Prostate gland (tissue), 2 donors: ENCODE measurements at regions of chr2 and their contacts with region 1.

Region 1: GRCh38 chr2:173402405-173402974 is 47.8 kb downstream of the CDCA7 start:
- DNase-seq: peak; percentile 74
- H3K4me3 ChIP-seq: no peak overlapping the region
- H3K27ac ChIP-seq: no peak overlapping the region
- H3K4me1 ChIP-seq: no peaks in the 10 kb centered on the region
- H3K27me3 ChIP-seq: no peaks in the 10 kb centered on the region
- CTCF ChIP-seq: peak; percentile 68 to 90 (median 86)
- POLR2A ChIP-seq: no peak

Region 2: DNA sequence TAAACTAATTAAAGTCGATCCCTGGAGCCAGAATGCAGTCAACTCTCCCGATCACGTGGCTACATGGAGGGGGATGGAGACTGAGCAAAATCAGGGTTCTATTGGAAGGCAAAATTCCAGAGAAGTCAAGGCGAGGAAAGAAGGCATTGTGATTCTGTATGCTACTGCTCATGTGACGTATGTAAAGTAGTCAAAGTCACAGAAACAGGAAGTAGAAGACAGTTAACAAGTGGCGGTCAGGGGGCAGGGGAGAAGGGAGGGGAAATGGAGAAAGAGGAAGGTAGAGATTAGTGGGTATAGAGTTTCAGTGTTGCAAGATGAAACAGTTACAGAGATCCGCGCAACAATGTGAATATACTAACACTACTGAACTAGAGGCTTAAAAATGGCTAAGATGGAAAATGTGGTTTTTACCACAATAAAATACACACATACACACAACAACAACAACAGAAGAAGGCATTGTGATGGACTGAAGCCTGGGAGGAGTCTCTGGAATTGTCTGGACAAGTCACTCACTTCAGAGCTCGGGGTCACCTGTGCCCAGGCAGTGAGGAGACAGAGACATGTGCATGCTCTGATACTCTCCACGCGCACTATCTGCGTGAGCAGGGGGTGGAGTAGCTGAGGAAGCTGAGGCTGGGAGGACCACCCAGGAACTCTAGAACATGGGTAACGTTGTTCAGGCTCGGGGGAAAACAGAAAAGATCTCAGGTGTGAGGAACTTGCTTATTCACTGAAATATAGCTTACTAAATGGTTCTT is 137.7 kb before region 1 on chr2:
- intact Hi-C with region 1: no loop called
- DNase-seq: no peak
- H3K4me3 ChIP-seq: no peak overlapping the region
- H3K27ac ChIP-seq: no peak overlapping the region
- H3K4me1 ChIP-seq: no peaks in the 10 kb centered on the region
- H3K27me3 ChIP-seq: no peaks in the 10 kb centered on the region
- CTCF ChIP-seq: no peak
- POLR2A ChIP-seq: no peak

Region 3: DNA sequence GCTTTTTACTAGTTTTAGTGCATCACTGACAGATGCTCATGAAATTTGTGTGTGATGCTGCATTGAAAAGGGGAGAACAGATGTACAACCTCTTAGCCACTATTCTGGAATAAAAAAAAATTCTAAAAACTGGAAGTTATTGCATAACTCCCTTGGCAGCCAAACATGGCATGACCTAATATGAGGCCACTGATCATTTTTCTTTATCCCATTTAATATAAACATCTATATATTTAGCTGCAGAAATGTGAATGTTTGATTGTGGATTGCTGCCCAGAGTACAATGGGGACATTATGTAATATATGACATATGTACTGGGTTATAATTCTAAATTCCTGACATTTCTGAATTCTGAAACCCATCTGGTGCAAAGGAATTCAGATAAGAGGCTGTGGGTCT is 38.7 kb after region 1 on chr2:
- intact Hi-C with region 1: loop called (anchors 5 kb)
- DNase-seq: no peak
- H3K4me3 ChIP-seq: no peak overlapping the region
- H3K27ac ChIP-seq: no peak overlapping the region
- H3K4me1 ChIP-seq: no peaks in the 10 kb centered on the region
- H3K27me3 ChIP-seq: no peaks in the 10 kb centered on the region
- CTCF ChIP-seq: no peak
- POLR2A ChIP-seq: no peak

Region 4: DNA sequence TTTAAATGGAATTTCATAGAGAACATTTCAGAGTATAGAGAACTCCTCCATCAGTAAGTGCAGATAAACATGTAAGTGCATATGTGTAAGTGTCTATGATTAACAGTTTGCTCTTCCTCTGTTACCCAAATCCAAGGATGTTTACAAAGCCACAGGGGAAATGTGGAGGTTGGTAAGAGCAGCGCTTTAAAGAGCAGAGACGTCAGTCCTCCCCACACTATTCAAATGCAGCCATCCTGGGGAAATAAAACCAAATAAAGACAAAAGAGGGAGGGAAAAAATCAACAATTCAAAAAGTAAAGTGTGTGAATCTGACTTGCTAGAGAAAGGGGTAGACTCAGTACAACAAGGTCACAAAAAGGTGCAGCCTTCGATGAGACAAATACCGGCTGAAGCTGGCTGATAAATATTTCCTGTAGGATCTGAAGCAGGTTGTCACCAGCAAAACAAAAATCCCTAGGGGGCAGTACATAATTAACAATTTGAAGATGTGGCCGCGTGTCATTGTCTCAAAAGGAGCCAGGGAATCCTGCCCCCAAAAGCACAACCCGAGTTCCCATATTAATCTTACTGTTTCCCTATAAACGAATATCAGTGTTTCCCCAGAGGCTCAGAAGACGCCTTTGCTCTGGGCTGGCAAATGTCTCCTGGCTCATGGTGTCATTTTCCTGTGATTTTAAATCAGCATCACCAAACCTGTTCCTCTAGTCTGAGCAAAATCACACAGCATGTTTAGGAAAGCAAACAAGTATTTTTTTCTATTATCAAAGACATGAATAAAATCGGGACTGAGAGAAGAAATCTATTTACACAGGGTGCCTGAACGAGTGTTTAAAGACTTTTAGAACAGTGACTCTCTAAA is 168.8 kb after region 1 on chr2:
- intact Hi-C with region 1: loop called (anchors 10 kb)
- DNase-seq: peak; percentile 68
- H3K4me3 ChIP-seq: peak overlapping the region in 1 of 2 donors; percentile 10
- H3K27ac ChIP-seq: peak overlapping the region; percentile 64 to 68
- H3K4me1 ChIP-seq: no peaks in the 10 kb centered on the region
- H3K27me3 ChIP-seq: no peaks in the 10 kb centered on the region
- CTCF ChIP-seq: peak in 3 of 4 experiments; percentile 50 to 55 (median 51)
- POLR2A ChIP-seq: no peak

Region 5: DNA sequence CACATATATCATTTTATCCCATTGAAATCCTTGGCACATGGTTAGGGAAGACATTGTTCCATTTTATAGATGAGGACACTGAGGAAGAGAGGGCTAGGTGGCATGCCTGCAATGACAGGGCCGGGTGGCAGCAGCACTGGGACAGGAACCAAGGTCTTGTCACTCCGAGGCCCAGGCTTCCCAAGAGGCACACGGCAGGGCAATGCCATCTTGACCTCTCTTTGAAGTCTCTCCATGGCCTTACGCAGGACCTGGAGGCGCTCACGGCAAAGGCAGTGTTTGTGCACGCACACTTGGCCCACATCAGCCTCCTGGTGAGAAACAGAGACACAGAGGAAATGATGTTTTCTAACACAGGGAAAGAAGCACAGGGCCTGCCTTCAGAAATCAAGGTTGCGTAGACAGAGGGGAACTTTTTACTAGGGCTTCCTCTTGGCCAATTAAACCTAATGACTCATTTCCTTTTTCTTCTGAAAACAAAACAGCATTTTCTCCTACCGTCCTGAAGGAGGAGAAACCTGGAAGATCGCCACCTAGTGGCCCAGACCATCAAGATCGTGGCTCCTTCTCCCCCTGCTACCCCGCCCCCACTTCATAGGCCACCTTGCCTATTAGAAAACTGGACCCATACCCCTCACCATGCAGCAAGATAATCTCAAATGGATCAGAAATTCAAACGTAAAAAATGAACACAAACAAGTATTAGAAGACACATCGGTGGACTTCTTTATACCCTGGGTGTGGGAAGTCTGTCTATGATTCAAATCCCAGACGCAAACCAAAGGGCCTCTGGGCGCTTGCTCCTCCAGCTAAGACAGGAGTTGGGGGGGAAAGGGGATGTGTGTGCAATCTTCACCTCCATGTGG is 637.3 kb after region 1 on chr2:
- intact Hi-C with region 1: loop called (anchors 10 kb)
- DNase-seq: peak; percentile 85
- H3K4me3 ChIP-seq: no peak overlapping the region
- H3K27ac ChIP-seq: peak overlapping the region; percentile 45 to 73
- H3K4me1 ChIP-seq: no peaks in the 10 kb centered on the region
- H3K27me3 ChIP-seq: no peaks in the 10 kb centered on the region
- CTCF ChIP-seq: peak; percentile 67 to 91 (median 86)
- POLR2A ChIP-seq: peak; percentile 14

Region 6: DNA sequence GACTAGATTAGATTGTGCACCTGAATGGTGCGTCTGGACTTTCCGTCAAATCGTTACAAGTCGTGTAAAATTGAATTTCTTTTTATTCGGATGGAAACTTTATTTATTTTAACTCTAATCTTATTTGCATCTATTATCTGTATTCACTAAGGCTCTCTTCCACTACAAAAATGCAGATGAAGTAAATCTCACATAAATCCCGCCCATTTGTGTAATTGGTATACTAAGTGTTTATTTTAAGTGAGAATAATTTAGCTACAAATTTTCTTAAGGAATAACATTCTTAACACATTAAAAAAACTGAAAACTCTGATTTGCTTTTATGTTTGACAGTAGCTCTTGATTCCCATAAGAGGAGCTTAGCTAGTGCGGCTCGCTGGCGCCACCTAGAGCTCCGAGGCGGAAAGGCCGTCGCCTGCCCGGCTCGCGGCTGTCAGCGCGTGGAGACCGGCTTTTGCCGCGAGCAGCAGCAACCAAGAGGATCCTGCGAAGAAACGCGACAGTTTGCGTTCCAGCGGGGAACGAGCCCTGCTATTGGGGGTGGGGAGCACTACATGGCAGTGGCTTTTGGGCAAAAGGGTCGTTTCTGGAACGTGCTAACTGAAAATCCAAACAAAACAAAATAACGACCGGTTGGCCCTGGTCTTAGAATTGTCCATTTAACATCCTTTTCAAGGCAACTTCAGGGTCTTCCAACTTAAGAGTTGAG is 939.0 kb after region 1 on chr2:
- intact Hi-C with region 1: loop called (anchors 5 kb)
- DNase-seq: peak; percentile 82
- H3K4me3 ChIP-seq: no peak overlapping the region
- H3K27ac ChIP-seq: no peak overlapping the region
- H3K4me1 ChIP-seq: no peaks in the 10 kb centered on the region
- H3K27me3 ChIP-seq: peaks cover 57% of the 10 kb centered on the region
- CTCF ChIP-seq: peak; percentile 82 to 94 (median 88)
- POLR2A ChIP-seq: peak; percentile 12